Activated CD4-positive, alpha-beta T cell treated with anti-CD3 and anti-CD28 coated beads, Interleukin-2, amount 10 ng/mL, durations not matched to agents 24 days and 14 days (primary cell): ENCODE measurements at regions of chr20 and their contacts with region 1.

Region 1: GRCh38 chr20:33686100-33686983 is at the start of gene E2F1:
- DNase-seq: peak; percentile 99
- H3K4me3 Mint-ChIP-seq: peak within 1 kb of the TSS; percentile 96
- H3K27ac Mint-ChIP-seq: peak within 1 kb of the TSS; percentile 93
- H3K4me1 Mint-ChIP-seq: peaks cover 70% of the 10 kb centered on the region
- H3K27me3 Mint-ChIP-seq: no peaks in the 10 kb centered on the region
- total RNA-seq, gene E2F1: 77.2 and 78.3 TPM in 2 replicates

Region 2: GRCh38 chr20:32621071-32621890 is 1065.1 kb before region 1 on chr20:
- intact Hi-C with region 1: no loop called
- DNase-seq: no peak
- H3K4me3 Mint-ChIP-seq: no peak overlapping the region
- H3K27ac Mint-ChIP-seq: peak overlapping the region; percentile 7
- H3K4me1 Mint-ChIP-seq: no peaks in the 10 kb centered on the region
- H3K27me3 Mint-ChIP-seq: peaks cover 10% of the 10 kb centered on the region

Region 3: DNA sequence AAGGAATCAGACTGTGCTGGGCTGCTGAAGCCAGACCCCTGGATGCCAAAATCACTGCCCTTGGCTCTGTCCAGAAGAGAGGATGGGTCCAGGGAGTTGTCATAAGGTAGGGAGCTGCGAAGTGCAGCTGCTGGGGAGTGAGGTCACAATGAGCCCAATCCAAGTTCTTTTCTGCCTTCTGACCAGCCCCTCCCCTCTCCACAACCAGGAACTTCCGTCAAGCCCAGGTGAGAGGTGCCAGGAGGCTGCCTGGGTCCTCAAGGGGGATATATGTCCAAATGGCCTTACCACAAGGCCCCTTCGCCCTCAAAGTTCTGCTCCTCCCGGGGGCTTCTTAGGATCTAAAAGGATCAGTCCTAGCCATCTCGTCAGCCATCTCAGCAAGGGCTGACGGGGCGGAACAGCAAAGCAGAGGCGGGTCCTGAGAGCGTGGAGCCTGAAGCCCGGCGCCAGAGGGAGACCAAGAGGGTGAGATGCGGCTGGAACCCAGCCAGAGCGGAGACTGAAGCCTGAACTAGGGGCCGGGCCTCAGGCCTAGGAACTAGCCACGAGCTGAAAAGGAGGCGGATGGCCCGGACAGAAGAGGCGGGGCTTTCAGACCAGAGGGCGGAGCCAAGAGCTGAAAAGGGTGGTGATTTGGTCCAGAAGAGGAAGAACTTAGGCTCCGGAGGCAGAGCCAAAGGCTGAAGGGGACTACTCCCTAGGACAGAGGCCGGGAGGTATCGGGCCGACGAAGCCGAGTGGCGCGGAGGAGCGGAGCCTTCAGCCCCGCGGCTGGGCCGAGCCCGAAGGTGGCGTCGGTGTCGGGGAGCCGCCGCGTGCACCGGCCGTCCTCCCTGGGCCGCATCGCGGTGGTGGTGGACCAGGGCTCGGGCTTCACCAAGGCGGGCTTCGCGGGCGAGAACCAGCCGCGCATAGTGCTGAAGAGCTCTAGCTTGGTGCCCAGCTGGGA is 19.8 kb before region 1 on chr20 and contains the start of gene ACTL10:
- intact Hi-C with region 1: loop called (anchors 2 kb)
- DNase-seq: peak; percentile 96
- H3K4me3 Mint-ChIP-seq: peak within 1 kb of the TSS; percentile 96
- H3K27ac Mint-ChIP-seq: peak within 1 kb of the TSS; percentile 98
- H3K4me1 Mint-ChIP-seq: peaks cover 36% of the 10 kb centered on the region
- H3K27me3 Mint-ChIP-seq: no peaks in the 10 kb centered on the region
- total RNA-seq, gene ACTL10: 3.7 TPM in 2 replicates

Region 4: DNA sequence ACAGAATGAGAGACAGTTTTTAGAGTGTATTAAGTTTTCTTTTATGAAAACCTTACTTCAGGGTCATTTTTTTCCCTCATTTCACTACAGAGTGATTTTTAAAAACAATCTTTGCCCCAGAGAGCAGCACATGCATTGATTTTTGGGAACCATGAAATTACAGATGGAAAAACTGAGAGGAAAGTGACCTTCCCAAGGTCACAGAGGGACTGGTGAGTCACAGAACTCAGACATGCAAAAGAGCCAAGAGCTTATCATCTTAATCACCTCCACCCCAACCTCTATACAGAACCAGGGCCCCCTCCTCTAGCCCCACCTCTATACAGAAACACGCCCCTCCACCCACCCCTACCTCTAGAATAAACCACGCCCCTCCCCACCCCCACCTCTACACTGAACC is 23.1 kb after region 1 on chr20:
- intact Hi-C with region 1: loop called (anchors 1 kb)
- DNase-seq: no peak
- H3K4me3 Mint-ChIP-seq: no peak overlapping the region
- H3K27ac Mint-ChIP-seq: peak overlapping the region; percentile 77
- H3K4me1 Mint-ChIP-seq: peaks cover 23% of the 10 kb centered on the region
- H3K27me3 Mint-ChIP-seq: no peaks in the 10 kb centered on the region

Region 5: GRCh38 chr20:33731693-33732165 is 45.4 kb after region 1 on chr20 and contains the start of gene ZNF341:
- intact Hi-C with region 1: loop called (anchors 1 kb)
- DNase-seq: peak; percentile 97
- H3K4me3 Mint-ChIP-seq: peak within 1 kb of the TSS; percentile 88
- H3K27ac Mint-ChIP-seq: peak within 1 kb of the TSS; percentile 96
- H3K4me1 Mint-ChIP-seq: peaks cover 27% of the 10 kb centered on the region
- H3K27me3 Mint-ChIP-seq: no peaks in the 10 kb centered on the region
- total RNA-seq, gene ZNF341: 6.1 and 7.1 TPM in 2 replicates

Region 6: DNA sequence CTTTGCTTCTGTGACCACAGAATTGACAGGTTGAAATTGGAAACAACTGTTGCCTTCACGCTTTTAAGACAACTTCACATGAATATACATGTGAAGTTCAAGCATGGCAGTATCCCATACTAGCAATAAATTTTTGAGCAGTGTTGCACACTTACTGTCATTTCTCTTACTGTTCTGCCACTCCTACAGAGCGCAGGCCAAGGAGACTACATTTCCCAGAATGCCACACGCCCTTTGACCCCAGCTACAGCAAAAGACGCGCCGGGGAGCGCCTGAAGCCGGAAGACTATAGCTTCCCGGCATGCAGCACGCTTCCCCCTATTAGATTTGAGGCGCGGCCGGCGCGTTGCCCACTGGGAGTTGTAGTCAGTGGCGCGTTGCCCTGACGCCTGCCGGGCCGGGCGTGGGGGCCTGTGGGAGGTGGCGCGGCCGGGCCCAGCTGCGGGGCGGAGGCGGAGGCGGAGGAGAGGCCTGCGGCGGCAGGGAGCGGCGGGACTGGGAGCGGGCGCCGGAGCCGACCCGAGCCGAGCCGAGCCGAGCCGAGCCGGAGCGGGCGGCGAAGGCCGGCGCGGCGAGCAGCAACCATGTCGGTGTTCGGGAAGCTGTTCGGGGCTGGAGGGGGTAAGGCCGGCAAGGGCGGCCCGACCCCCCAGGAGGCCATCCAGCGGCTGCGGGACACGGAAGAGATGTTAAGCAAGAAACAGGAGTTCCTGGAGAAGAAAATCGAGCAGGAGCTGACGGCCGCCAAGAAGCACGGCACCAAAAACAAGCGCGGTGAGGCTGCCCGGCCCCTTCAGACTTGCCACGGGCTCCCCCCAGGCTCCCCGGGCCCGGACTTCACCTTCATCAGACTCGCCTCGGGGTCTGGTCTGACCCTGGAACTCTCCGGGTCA is 124.8 kb after region 1 on chr20 and contains the start of gene CHMP4B:
- intact Hi-C with region 1: loop called (anchors 5 kb)
- DNase-seq: peak; percentile 100
- H3K4me3 Mint-ChIP-seq: peak within 1 kb of the TSS; percentile 99
- H3K27ac Mint-ChIP-seq: peak within 1 kb of the TSS; percentile 98
- H3K4me1 Mint-ChIP-seq: peaks cover 34% of the 10 kb centered on the region
- H3K27me3 Mint-ChIP-seq: peaks cover 2% of the 10 kb centered on the region
- total RNA-seq, gene CHMP4B: 95.6 and 102 TPM in 2 replicates